BJ (cell line): ENCODE measurements at regions of chr14 and their contacts with region 1.

Region 1: DNA sequence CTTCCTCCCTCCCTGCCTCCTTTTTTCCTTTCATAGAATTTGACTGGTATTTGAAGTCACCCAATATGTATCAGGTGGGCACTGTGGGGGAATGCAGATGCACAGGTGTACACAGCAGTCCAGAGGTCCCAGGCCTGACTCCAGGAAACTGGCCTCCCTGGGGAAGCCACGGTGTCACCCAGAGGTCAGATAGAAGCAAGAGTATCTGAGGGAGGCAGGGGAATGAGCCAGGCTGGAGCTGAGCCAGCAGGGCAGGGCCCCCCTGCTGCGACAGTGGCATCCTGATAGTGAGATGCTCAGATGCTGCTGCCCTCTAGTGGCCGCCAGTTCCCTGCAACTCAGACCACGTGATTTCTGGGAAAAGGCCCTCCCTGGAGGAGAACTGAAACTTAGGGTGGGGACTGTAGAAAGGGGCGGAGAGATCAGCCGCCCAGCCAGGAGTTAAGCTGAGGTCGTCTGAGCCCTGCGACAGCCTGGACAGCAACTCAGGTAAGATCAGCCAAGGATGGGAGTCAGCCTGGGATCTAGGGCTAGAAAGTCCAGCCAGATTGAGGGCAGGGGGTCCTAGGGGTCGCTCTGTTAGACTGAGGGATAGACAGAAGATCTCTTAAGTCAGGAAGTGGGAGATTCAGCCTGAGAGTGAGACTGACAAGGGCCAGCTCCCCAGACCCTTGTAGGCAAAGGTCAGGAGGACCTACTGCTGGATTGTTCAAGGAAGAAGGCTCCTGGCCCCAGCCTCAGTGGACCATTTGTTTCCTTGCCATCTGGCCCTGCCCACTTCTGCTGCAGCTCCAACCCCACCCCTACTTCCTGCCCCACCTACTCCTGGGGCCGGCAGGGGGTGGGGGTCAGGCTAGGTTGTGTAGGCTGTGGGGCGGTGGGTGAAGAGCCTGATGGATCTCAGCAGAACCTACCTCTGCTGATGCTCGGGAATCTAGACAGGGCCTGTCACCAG is at the start of gene IRF9:
- DNase-seq: peak; percentile 78
- H3K4me3 ChIP-seq: peak within 1 kb of the TSS; percentile 60
- H3K27me3 ChIP-seq: no peaks in the 10 kb centered on the region
- CTCF ChIP-seq: peak; percentile 96
- polyA plus RNA-seq, gene IRF9: 84.8 and 107 TPM in 2 replicates

Region 2: GRCh38 chr14:24114536-24115450 is 46.3 kb before region 1 on chr14 and contains the starts of genes DCAF11 and NRL:
- CTCF ChIA-PET with region 1: interaction called, 15 read pairs
- POLR2A ChIA-PET with region 1: no interaction called
- DNase-seq: peak; percentile 99
- H3K4me3 ChIP-seq: peak within 1 kb of the TSS; percentile 70
- H3K27me3 ChIP-seq: no peaks in the 10 kb centered on the region
- CTCF ChIP-seq: no peak
- polyA plus RNA-seq, gene DCAF11: 41.5 and 50.0 TPM in 2 replicates
- polyA plus RNA-seq, gene NRL: 0.59 and 0.91 TPM in 2 replicates

Region 3: GRCh38 chr14:24135834-24136542 is 25.1 kb before region 1 on chr14 and contains the start of gene PSME1:
- CTCF ChIA-PET with region 1: interaction called, 16 read pairs
- POLR2A ChIA-PET with region 1: interaction called, 8 read pairs
- DNase-seq: peak; percentile 32
- H3K4me3 ChIP-seq: peak within 1 kb of the TSS; percentile 86
- H3K27me3 ChIP-seq: no peaks in the 10 kb centered on the region
- CTCF ChIP-seq: no peak
- polyA plus RNA-seq, gene PSME1: 48.9 and 106 TPM in 2 replicates

Region 4: GRCh38 chr14:24146978-24147760 is 14.0 kb before region 1 on chr14 and contains the start of gene RNF31:
- CTCF ChIA-PET with region 1: interaction called, 39 read pairs
- POLR2A ChIA-PET with region 1: interaction called, 7 read pairs
- DNase-seq: peak; percentile 92
- H3K4me3 ChIP-seq: peak within 1 kb of the TSS; percentile 59
- H3K27me3 ChIP-seq: no peaks in the 10 kb centered on the region
- CTCF ChIP-seq: no peak
- polyA plus RNA-seq, gene RNF31: 8.2 and 12.4 TPM in 2 replicates

Region 5: DNA sequence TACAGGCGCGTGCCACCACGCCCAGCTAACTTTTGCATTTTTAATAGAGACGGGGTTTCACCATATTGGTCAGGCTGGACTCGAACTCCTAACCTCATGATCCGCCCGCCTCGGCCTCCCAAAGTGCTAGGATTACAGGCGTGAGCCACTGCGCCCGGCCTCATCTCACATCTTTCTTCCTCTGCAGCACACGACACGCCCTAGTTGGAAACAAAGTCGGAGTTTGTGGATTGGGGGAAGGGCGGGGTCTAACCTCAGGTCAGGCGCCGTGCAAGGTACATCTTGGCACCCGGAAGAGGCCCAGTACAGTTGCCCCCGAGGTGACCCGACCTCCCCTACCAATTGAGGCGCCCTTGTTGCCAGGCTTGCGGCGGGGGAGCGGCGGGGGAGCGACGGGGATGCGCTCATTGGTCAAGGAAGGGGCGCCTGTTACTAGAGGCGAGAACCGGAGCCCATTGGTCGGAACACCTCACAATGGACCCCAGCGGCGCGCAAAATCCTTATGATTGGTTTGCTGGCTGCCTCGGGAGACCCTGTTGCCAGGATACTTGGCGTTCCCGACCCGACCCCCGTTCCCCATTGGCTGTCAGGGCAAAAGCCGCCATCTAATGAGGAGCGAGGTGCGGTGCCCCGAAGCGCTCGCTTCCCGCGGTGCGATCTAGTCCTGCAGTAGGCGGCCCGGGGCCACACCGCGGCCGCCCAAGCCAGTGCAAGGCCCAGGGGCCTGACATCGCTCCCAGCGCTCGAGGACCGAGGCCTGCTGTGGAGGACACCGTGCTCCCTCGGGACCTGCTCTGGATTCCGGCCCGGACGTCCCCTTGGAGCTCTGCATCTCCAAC is 10.5 kb after region 1 on chr14 and contains the start of gene REC8:
- CTCF ChIA-PET with region 1: interaction called, 12 read pairs
- POLR2A ChIA-PET with region 1: interaction called, 6 read pairs
- DNase-seq: no peak
- H3K4me3 ChIP-seq: no peak within 1 kb of the TSS
- H3K27me3 ChIP-seq: no peaks in the 10 kb centered on the region
- CTCF ChIP-seq: no peak
- polyA plus RNA-seq, gene REC8: 2.7 and 5.5 TPM in 2 replicates

Region 6: GRCh38 chr14:24179961-24180796 is 19.1 kb after region 1 on chr14:
- CTCF ChIA-PET with region 1: interaction called, 14 read pairs
- POLR2A ChIA-PET with region 1: interaction called, 5 read pairs
- DNase-seq: peak; percentile 84
- H3K4me3 ChIP-seq: no peak overlapping the region
- H3K27me3 ChIP-seq: no peaks in the 10 kb centered on the region
- CTCF ChIP-seq: no peak

Region 7: DNA sequence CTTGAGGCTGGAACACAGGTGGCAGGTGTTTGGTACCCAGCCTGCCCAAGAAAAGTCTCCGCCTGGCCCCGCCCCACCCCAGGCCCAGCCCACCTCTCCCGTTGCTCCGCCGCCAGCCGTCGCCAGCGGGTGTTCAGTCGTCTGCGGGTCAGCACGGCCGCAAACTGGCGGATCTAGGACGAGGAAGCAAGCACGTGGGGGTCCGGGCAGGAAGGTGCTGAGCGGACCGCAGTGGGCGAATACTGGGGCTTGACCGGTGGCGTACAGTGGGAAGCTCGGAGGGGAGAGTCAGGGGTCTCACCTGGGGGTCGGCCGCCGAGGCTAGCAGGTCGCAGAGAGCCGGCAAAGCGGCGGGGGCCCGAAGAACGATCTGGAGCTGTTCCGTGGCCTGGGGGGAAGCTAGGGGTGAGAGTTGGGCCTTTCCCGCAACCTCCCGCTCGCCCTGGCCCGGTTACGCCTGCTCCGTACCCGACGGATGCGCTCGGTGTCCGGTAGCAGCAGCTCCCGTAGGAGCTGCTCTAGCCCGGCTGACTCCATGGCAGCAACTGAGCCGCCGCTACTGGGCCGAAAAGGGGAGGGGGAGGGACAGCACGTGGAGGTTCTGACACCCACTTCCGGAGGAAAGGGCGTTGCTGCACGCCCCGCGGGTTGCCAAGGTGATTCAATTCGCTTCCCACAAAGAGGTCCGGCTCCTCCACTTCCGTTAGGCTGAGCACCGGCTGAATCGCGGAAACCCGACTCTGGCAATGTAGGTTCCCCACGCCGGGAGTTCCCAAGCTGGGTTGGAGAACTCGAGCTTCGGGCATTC is 27.3 kb after region 1 on chr14 and contains the start of gene IPO4:
- CTCF ChIA-PET with region 1: interaction called, 18 read pairs
- POLR2A ChIA-PET with region 1: no interaction called
- DNase-seq: peak; percentile 79
- H3K4me3 ChIP-seq: peak within 1 kb of the TSS; percentile 70
- H3K27me3 ChIP-seq: no peaks in the 10 kb centered on the region
- CTCF ChIP-seq: no peak
- polyA plus RNA-seq, gene IPO4: 11.5 and 26.8 TPM in 2 replicates